ENCODE measurements at regions of chr5 and their contacts with region 1.

Region 1: DNA sequence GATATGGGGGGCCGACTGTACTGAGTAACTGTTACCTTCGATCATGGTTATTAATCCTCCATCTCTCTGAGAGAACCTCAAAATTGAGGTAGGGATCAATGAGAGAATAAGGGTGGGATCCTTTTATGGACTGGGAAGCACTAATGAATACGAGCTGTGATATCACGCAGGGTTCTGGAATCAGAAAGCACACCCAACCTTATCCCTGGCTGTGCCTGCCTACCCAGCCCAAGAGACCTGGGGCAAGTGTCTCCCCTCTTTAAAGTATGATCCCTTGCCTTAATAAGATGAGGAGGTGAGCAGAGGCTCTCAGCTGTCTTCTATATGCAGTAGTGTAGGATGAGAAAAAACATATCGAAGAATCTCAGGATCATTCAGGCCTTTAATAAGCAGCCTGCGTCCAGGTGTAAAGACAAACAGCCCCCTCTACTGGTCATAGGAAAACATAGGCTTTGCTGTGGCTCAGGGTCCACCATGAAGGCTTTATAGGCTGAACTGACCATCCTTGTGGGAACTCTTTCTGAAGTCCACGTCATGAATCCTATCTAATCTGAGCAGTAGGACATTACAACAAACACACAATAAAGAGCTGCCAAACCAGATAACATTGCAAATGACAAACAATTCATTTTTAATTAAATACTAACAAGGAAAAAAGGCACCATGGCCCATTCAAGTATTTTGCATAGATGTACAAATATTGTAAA is 16.8 kb downstream of the NIPAL4 start:
- DNase-seq: no peak
- ATAC-seq: no peak
- H3K4me3 Mint-ChIP-seq: no peak overlapping the region
- H3K27ac Mint-ChIP-seq: peak overlapping the region; percentile 68
- H3K4me1 Mint-ChIP-seq: peaks cover 76% of the 10 kb centered on the region
- H3K27me3 Mint-ChIP-seq: no peaks in the 10 kb centered on the region
- CTCF ChIP-seq: no peak

Region 2: DNA sequence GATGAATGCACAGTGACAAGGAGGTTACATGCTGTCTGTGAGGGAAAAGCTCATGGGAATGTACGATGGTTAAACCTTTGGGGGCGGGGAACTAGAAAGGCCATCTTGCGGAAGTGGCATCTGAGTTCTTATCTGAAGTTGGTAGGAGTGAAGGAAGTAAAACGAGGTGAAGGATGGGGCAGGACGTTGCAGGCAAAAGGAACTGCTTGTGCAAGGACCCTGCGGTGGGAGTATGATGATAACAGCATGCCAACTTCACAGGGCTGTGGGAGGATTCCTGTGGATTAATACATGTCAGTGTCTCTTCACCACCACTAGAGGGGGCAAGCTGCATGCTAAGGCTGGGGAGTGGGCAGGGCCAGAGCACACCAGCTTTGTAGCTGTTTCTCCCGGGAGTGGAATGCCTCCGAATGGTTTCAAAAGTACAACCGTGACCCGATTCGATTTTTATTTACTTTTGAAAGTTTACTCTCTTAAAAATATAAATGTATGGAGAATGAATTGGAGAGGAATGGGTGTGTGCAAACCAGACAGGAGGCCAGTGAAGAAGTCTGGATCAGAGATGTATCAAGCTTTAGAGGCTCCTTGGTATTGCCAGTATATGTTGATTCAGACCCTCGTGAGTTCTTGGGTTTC is 148.5 kb before region 1 on chr5:
- CTCF ChIA-PET with region 1: interaction called, 5 read pairs
- POLR2A ChIA-PET with region 1: interaction called, 3 read pairs
- intact Hi-C with region 1: loop called (anchors 5 kb)
- DNase-seq: no peak
- ATAC-seq: peak; percentile 100
- H3K4me3 Mint-ChIP-seq: no peak overlapping the region
- H3K27ac Mint-ChIP-seq: peak overlapping the region; percentile 36
- H3K4me1 Mint-ChIP-seq: peaks cover 6% of the 10 kb centered on the region
- H3K27me3 Mint-ChIP-seq: no peaks in the 10 kb centered on the region
- CTCF ChIP-seq: peak; percentile 59

Region 3: GRCh38 chr5:157342822-157343402 is 133.9 kb before region 1 on chr5:
- CTCF ChIA-PET with region 1: interaction called, 5 read pairs
- POLR2A ChIA-PET with region 1: no interaction called
- intact Hi-C with region 1: loop called (anchors 1 kb)
- DNase-seq: peak; percentile 27
- ATAC-seq: peak; percentile 50
- H3K4me3 Mint-ChIP-seq: no peak overlapping the region
- H3K27ac Mint-ChIP-seq: no peak overlapping the region
- H3K4me1 Mint-ChIP-seq: no peaks in the 10 kb centered on the region
- H3K27me3 Mint-ChIP-seq: no peaks in the 10 kb centered on the region
- CTCF ChIP-seq: no peak

Region 4: DNA sequence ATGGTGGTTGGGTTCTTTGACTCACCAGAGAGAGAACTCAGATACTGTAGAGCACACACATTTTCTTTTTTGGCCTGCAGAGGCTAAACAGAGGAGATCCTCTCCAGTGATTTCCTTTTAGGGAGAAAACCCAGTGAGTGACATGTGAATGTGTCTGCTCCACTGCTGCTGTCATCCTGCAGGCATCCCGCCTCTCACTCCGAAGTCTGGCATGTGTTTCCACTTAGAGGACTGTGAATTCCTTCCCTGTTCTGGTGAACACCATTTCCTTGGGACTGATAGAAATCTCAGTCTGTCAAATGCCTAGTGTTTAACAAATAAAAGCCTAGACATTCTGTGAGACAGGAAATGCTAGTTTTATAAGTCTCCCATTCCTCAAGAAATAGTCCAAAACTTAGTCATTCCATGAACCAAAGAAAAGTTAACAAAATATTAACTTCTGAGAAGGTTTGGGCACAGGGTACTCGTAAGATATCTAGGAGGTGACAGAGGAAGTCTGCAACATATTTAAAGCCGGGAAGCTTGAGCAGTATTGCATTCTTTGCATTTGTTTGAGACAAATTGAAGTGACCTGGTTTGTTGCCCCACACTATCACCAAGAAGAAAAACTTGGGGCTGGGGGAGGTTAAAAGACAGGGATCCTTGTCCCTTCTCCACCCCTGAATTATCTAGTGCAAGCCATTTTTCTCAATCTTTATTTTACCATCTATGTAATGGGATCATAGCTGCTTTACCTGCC is 91.7 kb before region 1 on chr5:
- CTCF ChIA-PET with region 1: no interaction called
- POLR2A ChIA-PET with region 1: no interaction called
- intact Hi-C with region 1: loop called (anchors 10 kb)
- DNase-seq: no peak
- ATAC-seq: no peak
- H3K4me3 Mint-ChIP-seq: no peak overlapping the region
- H3K27ac Mint-ChIP-seq: no peak overlapping the region
- H3K4me1 Mint-ChIP-seq: peaks cover 3% of the 10 kb centered on the region
- H3K27me3 Mint-ChIP-seq: no peaks in the 10 kb centered on the region
- CTCF ChIP-seq: no peak

Region 5: DNA sequence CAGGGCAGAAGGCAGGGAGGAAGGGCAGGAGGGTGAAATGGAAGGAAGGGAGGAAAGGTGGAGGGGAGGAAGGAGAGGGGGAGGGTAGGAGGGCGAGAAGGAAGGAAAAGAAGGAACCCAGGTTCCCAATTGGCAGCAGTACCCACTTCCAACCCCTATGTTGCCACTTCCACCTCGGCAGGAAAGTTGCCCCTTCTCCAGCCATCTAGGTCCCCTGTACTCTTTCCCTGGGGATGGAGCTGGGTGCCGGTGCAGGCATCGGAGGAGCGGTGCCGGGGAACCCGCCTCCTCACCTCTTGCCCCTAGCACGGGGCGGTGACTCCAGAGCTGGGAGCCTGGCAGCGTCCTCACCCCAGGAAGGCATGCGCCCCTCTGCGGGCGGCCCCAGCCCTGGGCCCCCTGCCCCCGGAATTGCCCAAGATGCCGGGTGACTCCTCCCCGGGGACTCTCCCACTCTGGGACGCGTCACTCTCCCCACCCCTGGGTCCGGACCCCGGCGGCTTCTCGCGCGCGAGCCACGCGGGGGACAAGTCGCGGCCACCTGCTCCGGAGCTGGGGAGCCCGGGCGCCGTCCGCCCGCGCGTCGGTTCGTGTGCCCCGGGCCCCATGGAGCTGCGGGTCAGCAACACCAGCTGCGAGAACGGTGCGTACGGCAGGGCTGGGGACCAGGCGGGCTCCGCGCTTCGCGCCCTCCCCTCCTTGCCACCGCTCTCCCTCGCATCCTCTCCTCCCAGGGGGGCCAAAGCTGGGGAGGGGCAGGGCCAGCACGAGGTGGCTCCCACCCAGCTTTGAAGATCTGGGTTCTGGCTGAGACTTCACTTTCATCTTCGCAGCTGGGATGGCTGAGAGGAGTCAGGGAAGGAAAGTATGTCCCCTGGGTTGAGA is 16.9 kb before region 1 on chr5 and contains the start of gene NIPAL4:
- CTCF ChIA-PET with region 1: interaction called, 14 read pairs
- POLR2A ChIA-PET with region 1: no interaction called
- intact Hi-C with region 1: loop called (anchors 2 kb)
- DNase-seq: peak; percentile 48
- ATAC-seq: peak; percentile 54
- H3K4me3 Mint-ChIP-seq: peak within 1 kb of the TSS; percentile 84
- H3K27ac Mint-ChIP-seq: peak within 1 kb of the TSS; percentile 72
- H3K4me1 Mint-ChIP-seq: peaks cover 75% of the 10 kb centered on the region
- H3K27me3 Mint-ChIP-seq: no peaks in the 10 kb centered on the region
- CTCF ChIP-seq: no peak
- total RNA-seq, gene NIPAL4: 2.7 and 2.8 TPM in 2 replicates

Region 6: DNA sequence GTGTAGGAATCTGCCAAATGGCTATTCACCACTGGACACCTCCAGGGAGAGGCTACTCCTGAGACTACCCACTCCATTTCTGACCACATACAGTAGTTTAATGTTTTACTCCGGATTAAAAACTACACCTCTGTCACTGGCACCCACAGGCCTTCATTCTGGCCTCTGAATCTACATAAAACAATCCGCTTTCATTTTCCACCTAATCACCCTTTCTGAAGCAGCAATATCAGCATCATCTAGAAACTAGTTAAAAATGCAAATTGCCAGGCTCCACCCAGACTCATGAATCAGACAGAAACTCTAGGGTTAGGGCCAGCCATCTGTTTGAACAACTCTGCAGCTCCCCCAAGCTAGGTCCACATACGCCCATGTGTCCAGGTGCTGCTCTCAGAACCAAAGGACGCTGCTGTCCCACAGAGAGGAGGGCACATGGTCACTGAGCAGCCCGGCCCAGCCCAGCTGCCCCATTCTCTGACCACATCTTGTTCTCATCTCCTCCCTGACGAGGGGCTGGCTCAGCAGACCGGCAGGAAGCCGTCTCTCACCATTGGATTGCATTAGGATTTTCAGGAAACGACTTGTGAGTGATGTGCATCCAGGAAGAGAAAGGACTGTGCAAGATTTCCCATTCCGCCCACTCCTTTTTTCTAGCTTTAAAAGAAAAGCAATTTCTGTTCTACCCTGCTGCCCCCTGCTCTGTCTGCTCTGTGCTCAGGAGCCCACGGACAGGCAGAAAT is 64.0 kb after region 1 on chr5:
- CTCF ChIA-PET with region 1: interaction called, 3 read pairs
- POLR2A ChIA-PET with region 1: no interaction called
- intact Hi-C with region 1: loop called (anchors 2 kb)
- DNase-seq: peak; percentile 37
- ATAC-seq: peak; percentile 91
- H3K4me3 Mint-ChIP-seq: peak overlapping the region; percentile 60
- H3K27ac Mint-ChIP-seq: peak overlapping the region; percentile 92
- H3K4me1 Mint-ChIP-seq: peaks cover 86% of the 10 kb centered on the region
- H3K27me3 Mint-ChIP-seq: no peaks in the 10 kb centered on the region
- CTCF ChIP-seq: no peak

Region 7: DNA sequence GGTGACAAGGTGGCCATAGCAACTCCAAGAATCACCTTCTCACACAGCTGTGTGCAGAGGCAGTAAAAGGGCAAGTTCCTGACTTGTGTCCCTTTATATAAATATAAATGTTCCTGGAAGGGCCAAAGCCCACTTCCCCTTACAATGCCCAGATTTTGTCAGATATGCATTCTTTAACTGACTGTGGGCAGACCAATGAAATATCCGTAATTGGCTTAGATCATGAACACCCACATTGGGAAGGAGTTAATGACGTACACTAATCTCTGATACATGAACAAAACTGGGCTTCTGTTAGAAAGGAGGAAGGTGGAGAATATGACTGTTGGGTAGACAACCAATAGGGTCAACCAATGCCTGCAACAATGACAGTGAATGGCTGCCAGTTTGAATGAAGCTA is 779.2 kb after region 1 on chr5:
- CTCF ChIA-PET with region 1: no interaction called
- POLR2A ChIA-PET with region 1: no interaction called
- intact Hi-C with region 1: no loop called
- DNase-seq: no peak
- ATAC-seq: no peak
- H3K4me3 Mint-ChIP-seq: no peak overlapping the region
- H3K27ac Mint-ChIP-seq: no peak overlapping the region
- H3K4me1 Mint-ChIP-seq: no peaks in the 10 kb centered on the region
- H3K27me3 Mint-ChIP-seq: no peaks in the 10 kb centered on the region
- CTCF ChIP-seq: no peak